ENCODE measurements at regions of chr14 and their contacts with region 1.

Region 1: DNA sequence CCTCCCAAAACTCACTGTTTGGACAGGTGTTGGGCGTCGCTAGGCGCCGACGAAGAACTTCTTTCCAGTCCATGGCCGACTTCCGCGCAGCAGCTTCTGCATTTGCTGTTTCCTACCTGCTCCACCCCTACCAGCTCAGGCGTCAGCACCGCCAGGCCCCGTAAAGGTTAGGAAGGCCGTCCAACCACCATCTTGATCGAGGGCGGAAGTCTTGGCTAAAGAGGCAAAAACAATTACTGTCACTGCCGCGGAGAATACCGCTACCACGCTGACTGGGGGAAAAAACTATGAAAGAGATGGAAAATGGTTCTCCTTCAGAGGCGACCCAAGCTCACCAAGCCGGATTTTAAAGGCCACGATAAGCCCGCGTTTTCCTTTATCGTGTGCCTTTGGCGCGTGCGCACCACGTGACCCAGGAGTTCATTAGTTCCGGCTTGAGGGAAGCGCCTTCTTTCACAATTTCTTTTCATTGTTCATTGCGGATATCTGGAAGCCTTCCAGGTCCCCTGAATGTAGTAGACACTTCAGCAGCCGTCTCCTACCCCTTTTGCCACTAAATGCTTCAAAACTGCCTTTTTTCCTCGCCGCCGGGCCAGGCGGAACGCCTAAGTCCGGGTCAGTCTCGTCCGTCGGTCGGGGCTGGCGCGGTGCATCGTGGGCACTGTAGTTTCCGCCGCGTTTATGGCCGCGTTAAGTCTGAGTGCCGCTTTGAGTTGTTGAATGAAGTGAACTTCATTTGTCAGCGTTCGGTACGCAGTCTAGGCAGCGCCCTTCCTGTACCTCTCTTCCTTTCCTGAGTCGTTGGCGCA is at the starts of genes PPP2R3C and PRORP:
- DNase-seq: peak; percentile 84 to 87
- H3K4me3 ChIP-seq: peak within 1 kb of the TSS; percentile 65
- H3K27ac ChIP-seq: peak within 1 kb of the TSS; percentile 97
- H3K4me1 ChIP-seq: peaks cover 9% of the 10 kb centered on the region
- H3K27me3 ChIP-seq: no peaks in the 10 kb centered on the region
- CTCF ChIP-seq: no peak
- total RNA-seq, gene PPP2R3C: 13.3 and 15.4 TPM in 2 replicates
- total RNA-seq, gene PRORP: 18.2 and 24.7 TPM in 2 replicates

Region 2: DNA sequence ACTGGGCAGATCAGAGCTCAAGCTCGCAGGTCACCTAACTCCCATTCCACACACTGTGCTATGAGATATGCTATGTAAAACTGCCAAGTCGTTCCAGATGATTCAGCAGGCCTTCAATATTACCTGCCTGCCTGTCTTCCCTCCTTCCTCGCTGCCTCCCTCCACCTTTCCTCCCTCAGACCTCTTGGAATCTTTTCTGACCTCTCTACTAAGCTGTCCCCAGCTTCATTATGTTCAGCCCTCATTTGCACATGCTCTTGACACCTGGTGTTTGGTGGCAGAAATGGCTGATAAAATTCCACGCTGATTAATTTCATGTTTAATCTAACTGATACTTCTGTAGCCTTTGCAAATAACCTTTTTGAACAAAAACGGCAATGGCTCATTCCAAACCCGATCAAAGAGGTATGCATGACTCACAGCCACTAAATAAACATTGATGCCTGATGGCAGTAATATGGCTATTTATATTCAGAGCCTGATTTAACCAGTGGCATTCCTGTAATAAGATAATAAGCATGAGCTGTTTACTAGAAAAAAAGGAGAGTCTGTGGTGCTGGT is 1040.4 kb before region 1 on chr14:
- CTCF ChIA-PET with region 1: no interaction called
- POLR2A ChIA-PET with region 1: no interaction called
- intact Hi-C with region 1: no loop called
- DNase-seq: peak; percentile 49 to 91
- H3K4me3 ChIP-seq: no peak overlapping the region; the same call in 1 of the 2 replicates
- H3K27ac ChIP-seq: peak overlapping the region; percentile 85
- H3K4me1 ChIP-seq: peaks cover 64% of the 10 kb centered on the region
- H3K27me3 ChIP-seq: no peaks in the 10 kb centered on the region
- CTCF ChIP-seq: no peak

Region 3: GRCh38 chr14:35197015-35197414 is 74.9 kb after region 1 on chr14:
- CTCF ChIA-PET with region 1: no interaction called
- POLR2A ChIA-PET with region 1: no interaction called
- intact Hi-C with region 1: no loop called
- DNase-seq: peak in 1 of 2 experiments; percentile 55
- H3K4me3 ChIP-seq: no peak overlapping the region
- H3K27ac ChIP-seq: no peak overlapping the region
- H3K4me1 ChIP-seq: 0 out of 2 replicates have a peak, but pooled peaks cover 10% of the 10 kb centered on the region
- H3K27me3 ChIP-seq: no peaks in the 10 kb centered on the region
- CTCF ChIP-seq: no peak

Region 4: DNA sequence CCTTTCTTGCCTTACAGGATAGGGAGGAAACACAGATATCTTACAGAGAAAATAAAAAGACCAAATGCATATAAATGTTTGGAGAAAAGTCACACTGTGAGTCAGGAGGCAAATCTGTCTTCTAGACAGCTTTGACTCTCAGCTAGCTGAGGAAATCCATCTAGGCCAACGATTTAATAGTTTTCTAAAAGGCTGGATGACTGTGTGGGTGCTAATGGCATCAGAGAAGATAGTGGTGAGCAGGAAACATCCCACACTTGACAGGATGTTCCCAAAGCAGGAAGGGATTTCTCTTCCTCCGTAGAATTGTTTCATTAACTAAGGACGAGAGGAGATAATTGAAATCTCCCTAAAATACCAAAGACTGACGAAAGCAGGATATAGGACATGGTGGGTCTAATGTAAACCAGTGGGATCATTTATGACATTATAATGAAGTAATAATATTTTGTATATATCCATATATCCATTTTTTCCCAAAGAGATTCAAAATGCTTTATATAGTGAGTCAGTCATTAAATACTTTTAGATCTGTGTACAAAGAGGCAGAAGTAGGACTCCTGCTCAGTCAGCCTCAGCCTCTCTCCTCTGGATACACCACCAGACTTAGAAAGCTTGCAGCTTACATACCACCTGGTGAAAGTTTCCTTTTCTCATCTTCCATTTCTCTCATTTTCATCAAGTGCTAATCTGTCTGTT is 125.8 kb after region 1 on chr14:
- CTCF ChIA-PET with region 1: no interaction called
- POLR2A ChIA-PET with region 1: no interaction called
- intact Hi-C with region 1: no loop called
- DNase-seq: no peak
- H3K4me3 ChIP-seq: no peak overlapping the region
- H3K27ac ChIP-seq: no peak overlapping the region
- H3K4me1 ChIP-seq: no peaks in the 10 kb centered on the region
- H3K27me3 ChIP-seq: no peaks in the 10 kb centered on the region
- CTCF ChIP-seq: no peak

Region 5: DNA sequence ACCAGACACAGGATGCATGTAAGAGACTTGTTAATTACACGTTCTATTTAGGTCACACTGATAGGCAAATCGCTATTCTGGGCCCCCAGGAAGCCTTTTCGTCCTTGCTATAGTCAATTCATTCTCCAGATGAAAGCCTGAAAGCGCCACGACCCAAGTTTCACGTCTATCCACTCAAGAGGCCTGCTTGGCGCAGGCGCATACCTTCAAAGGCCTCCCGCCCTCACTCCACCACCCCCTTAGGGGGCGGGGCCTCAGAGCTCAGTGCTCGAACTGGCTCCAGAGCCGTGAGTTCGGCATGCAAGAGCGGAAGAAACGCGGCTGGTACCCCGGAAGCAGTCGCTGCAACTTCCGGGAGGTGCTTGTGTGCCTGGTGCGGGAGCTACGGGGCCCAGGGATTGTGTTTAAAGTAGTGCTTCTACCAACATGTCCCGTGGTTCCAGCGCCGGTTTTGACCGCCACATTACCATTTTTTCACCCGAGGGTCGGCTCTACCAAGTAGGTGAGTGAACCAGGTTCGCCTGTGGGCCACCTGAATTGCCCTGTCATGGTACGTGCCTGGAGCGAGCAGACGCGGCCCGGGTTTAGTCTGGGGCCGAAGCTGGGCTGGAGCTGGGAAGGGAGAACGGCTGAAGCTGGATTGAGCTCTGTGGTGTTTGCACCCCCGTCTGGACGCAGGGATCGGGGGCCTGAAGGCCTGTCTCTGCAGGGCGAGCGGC is 170.1 kb after region 1 on chr14 and contains the start of gene PSMA6:
- CTCF ChIA-PET with region 1: no interaction called
- POLR2A ChIA-PET with region 1: no interaction called
- intact Hi-C with region 1: loop called (anchors 1 kb)
- DNase-seq: peak; percentile 94 to 95
- H3K4me3 ChIP-seq: peak within 1 kb of the TSS; percentile 94
- H3K27ac ChIP-seq: peak within 1 kb of the TSS; percentile 67
- H3K4me1 ChIP-seq: peaks cover 21% of the 10 kb centered on the region
- H3K27me3 ChIP-seq: no peaks in the 10 kb centered on the region
- CTCF ChIP-seq: no peak
- total RNA-seq, gene PSMA6: 118 and 188 TPM in 2 replicates

Region 6: DNA sequence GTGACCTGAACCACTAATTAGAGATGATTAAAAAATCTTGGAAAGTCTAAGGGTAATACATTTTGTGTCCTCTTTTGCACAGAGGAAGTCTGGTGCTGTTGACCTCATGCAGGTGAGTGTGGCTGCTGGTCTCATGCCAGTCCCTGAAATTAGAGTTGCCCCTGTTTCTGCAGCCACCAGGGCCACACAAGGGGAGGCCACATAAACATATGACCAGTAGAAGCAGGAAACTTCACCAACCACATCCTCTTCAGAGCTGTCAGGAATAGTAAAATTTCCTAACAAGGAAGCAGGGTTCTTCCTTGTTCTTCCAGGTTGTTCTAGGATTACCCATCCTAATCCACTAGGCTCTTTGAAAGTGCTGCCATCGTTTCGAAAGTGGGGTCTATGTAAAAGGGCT is 198.4 kb after region 1 on chr14:
- CTCF ChIA-PET with region 1: no interaction called
- POLR2A ChIA-PET with region 1: no interaction called
- intact Hi-C with region 1: no loop called
- DNase-seq: no peak
- H3K4me3 ChIP-seq: no peak overlapping the region
- H3K27ac ChIP-seq: no peak overlapping the region
- H3K4me1 ChIP-seq: no peaks in the 10 kb centered on the region
- H3K27me3 ChIP-seq: no peaks in the 10 kb centered on the region
- CTCF ChIP-seq: no peak

Measured in PC-9 (cell line).